ENCODE measurements at regions of chr6 and their contacts with region 1.

Region 1: GRCh38 chr6:111605100-111605751 is 452 bp downstream of the TRAF3IP2 start:
- DNase-seq: peak; percentile 95
- H3K4me3 ChIP-seq: peak overlapping the region; percentile 56 to 77 (median 64)
- H3K27ac ChIP-seq: peak overlapping the region; percentile 93 to 99 (median 96)
- H3K4me1 ChIP-seq: peaks cover 46 to 74% (median 62%) of the 10 kb centered on the region in 4 donors
- H3K27me3 ChIP-seq: no peaks in the 10 kb centered on the region
- CTCF ChIP-seq: no peak
- EP300 ChIP-seq: peak; percentile 43
- POLR2A ChIP-seq: no peak

Region 2: GRCh38 chr6:111483736-111484632 is 121.2 kb before region 1 on chr6:
- intact Hi-C with region 1: loop called (anchors 2 kb)
- DNase-seq: peak; percentile 98
- H3K4me3 ChIP-seq: peak overlapping the region; percentile 81 to 100 (median 94)
- H3K27ac ChIP-seq: peak overlapping the region; percentile 98 to 100 (median 100)
- H3K4me1 ChIP-seq: peaks cover 22 to 66% (median 54%) of the 10 kb centered on the region in 4 donors
- H3K27me3 ChIP-seq: no peaks in the 10 kb centered on the region
- CTCF ChIP-seq: no peak
- EP300 ChIP-seq: no peak
- POLR2A ChIP-seq: peak; percentile 62

Region 3: GRCh38 chr6:111559188-111560097 is 45.8 kb before region 1 on chr6:
- intact Hi-C with region 1: loop called (anchors 5 kb)
- DNase-seq: no peak
- H3K4me3 ChIP-seq: no peak overlapping the region
- H3K27ac ChIP-seq: peak overlapping the region; percentile 80 to 87 (median 83)
- H3K4me1 ChIP-seq: peaks cover 34 to 76% (median 66%) of the 10 kb centered on the region in 4 donors
- H3K27me3 ChIP-seq: no peaks in the 10 kb centered on the region
- CTCF ChIP-seq: no peak
- EP300 ChIP-seq: no peak
- POLR2A ChIP-seq: no peak